T-cell (primary cell): ENCODE measurements at regions of chr12 and their contacts with region 1.

Region 1: GRCh38 chr12:24991209-24992049 is 42.5 kb upstream of the BCAT1 start:
- DNase-seq: peak in 8 of 35 experiments; percentile 1 to 82 (median 15)
- ATAC-seq: peak; percentile 76 to 91 (median 84)
- H3K4me3 ChIP-seq: no peak overlapping the region
- H3K4me3 Mint-ChIP-seq: no peak overlapping the region
- H3K27ac ChIP-seq: no peak overlapping the region
- H3K27ac Mint-ChIP-seq: no peak overlapping the region
- H3K4me1 ChIP-seq: no peaks in the 10 kb centered on the region
- H3K4me1 Mint-ChIP-seq: peaks cover 0 to 3% (median 0%) of the 10 kb centered on the region in 3 donors
- H3K27me3 ChIP-seq: peaks cover 0 to 2% of the 10 kb centered on the region in 2 experiments
- H3K27me3 Mint-ChIP-seq: peaks cover 0 to 9% of the 10 kb centered on the region in 2 donors

Region 2: DNA sequence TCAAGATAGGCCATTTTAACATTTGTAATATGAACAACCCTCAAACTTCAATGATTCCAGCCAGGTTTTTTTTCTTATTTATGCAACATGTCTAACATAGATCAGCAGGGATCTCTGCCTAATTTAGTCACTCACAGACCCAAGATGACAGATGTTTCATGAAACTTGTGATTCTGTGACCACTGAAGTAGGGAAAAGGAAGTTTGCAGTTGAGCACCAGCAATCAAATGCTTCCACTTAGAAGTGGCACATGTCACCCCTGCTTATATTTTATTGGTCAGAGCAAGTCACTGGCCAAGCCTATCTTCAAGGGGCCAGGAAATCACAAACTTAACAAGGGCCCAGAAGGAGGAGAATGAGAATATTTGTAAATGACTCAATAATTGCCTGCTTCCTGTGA is 193.1 kb before region 1 on chr12:
- CTCF ChIA-PET with region 1: no interaction called
- POLR2A ChIA-PET with region 1: no interaction called
- DNase-seq: no peak
- ATAC-seq: no peak
- H3K4me3 ChIP-seq: no peak overlapping the region
- H3K4me3 Mint-ChIP-seq: no peak overlapping the region
- H3K27ac ChIP-seq: no peak overlapping the region
- H3K27ac Mint-ChIP-seq: no peak overlapping the region
- H3K4me1 ChIP-seq: peaks cover 0 to 9% of the 10 kb centered on the region in 2 experiments
- H3K4me1 Mint-ChIP-seq: peaks cover 18 to 25% (median 20%) of the 10 kb centered on the region in 3 donors
- H3K27me3 ChIP-seq: no peaks in the 10 kb centered on the region
- H3K27me3 Mint-ChIP-seq: no peaks in the 10 kb centered on the region

Region 3: DNA sequence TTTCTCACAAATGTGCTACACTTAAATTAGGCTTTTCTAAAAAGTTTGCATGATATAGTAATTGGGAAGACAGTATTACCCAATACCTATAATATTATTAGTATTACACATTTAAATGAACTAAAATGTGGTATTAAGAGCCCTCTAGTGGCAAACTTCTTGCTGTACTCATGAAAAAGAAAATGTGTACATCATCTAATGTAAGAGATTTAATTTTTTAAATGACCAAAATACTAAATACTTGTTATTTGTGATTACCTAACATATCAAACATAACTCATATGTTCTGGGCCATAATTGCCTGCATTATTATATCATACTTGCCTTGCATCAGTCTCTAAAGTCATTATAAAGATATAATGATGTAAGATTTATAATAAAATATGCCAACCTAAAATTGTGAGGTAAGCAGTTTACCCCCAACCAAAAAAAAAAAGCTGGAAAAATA is 139.3 kb after region 1 on chr12:
- CTCF ChIA-PET with region 1: interaction called, 30 to 42 read pairs
- POLR2A ChIA-PET with region 1: interaction called in 1 of 2 experiments, 3 read pairs
- DNase-seq: peak in 1 of 35 experiments; percentile 63
- ATAC-seq: peak in 1 of 4 experiments; percentile 39
- H3K4me3 ChIP-seq: no peak overlapping the region
- H3K4me3 Mint-ChIP-seq: no peak overlapping the region
- H3K27ac ChIP-seq: no peak overlapping the region
- H3K27ac Mint-ChIP-seq: no peak overlapping the region
- H3K4me1 ChIP-seq: no peaks in the 10 kb centered on the region
- H3K4me1 Mint-ChIP-seq: no peaks in the 10 kb centered on the region
- H3K27me3 ChIP-seq: no peaks in the 10 kb centered on the region
- H3K27me3 Mint-ChIP-seq: peaks cover 0 to 4% of the 10 kb centered on the region in 2 donors

Region 4: GRCh38 chr12:25151476-25151875 is 160.0 kb after region 1 on chr12:
- CTCF ChIA-PET with region 1: interaction called, 20 to 24 read pairs
- POLR2A ChIA-PET with region 1: interaction called in 1 of 2 experiments, 4 read pairs
- DNase-seq: no peak
- ATAC-seq: no peak
- H3K4me3 ChIP-seq: no peak overlapping the region
- H3K4me3 Mint-ChIP-seq: no peak overlapping the region
- H3K27ac ChIP-seq: no peak overlapping the region
- H3K27ac Mint-ChIP-seq: no peak overlapping the region
- H3K4me1 ChIP-seq: no peaks in the 10 kb centered on the region
- H3K4me1 Mint-ChIP-seq: peaks cover 7 to 11% (median 8%) of the 10 kb centered on the region in 3 donors
- H3K27me3 ChIP-seq: no peaks in the 10 kb centered on the region
- H3K27me3 Mint-ChIP-seq: no peaks in the 10 kb centered on the region

Region 5: GRCh38 chr12:25725931-25726330 is 734.5 kb after region 1 on chr12:
- CTCF ChIA-PET with region 1: no interaction called
- POLR2A ChIA-PET with region 1: no interaction called
- DNase-seq: no peak
- ATAC-seq: no peak
- H3K4me3 ChIP-seq: no peak overlapping the region
- H3K4me3 Mint-ChIP-seq: no peak overlapping the region
- H3K27ac ChIP-seq: no peak overlapping the region
- H3K27ac Mint-ChIP-seq: no peak overlapping the region
- H3K4me1 ChIP-seq: no peaks in the 10 kb centered on the region
- H3K4me1 Mint-ChIP-seq: no peaks in the 10 kb centered on the region
- H3K27me3 ChIP-seq: no peaks in the 10 kb centered on the region
- H3K27me3 Mint-ChIP-seq: no peaks in the 10 kb centered on the region